ENCODE measurements at regions of chr19 and their contacts with region 1.

Region 1: DNA sequence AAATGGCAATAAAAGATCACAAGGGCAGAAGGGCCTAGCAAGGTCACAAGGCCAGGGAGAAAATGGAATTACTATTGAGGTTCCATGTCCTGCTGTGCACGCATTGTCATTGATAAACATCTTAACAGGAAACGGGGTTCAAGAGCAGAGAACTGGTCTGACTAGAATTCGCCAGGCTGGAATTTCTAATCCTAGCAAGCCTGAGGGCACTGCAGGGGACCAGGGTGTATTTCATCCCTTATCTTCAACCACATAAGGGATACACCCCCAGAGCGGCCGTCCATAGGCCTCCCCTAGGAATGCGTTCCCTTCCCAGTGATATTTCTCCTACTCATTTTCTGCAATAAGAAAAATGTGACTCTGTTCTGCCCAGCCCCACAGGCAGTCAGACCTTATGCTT is 19.5 kb downstream of the ERICH4 start:
- DNase-seq: no peak
- ATAC-seq: no peak
- H3K4me3 ChIP-seq: no peak overlapping the region
- H3K27ac ChIP-seq: no peak overlapping the region
- H3K4me1 ChIP-seq: no peaks in the 10 kb centered on the region
- H3K27me3 ChIP-seq: peaks cover 10% of the 10 kb centered on the region
- CTCF ChIP-seq: no peak

Region 2: GRCh38 chr19:41541990-41542584 is 79.6 kb after region 1 on chr19:
- CTCF ChIA-PET with region 1: no interaction called
- POLR2A ChIA-PET with region 1: no interaction called
- in situ Hi-C with region 1: no loop called
- intact Hi-C with region 1: loop called (anchors 10 kb)
- DNase-seq: no peak
- ATAC-seq: no peak
- H3K4me3 ChIP-seq: no peak overlapping the region
- H3K27ac ChIP-seq: no peak overlapping the region
- H3K4me1 ChIP-seq: no peaks in the 10 kb centered on the region
- H3K27me3 ChIP-seq: no peaks in the 10 kb centered on the region
- CTCF ChIP-seq: peak; percentile 76

Region 3: GRCh38 chr19:41554907-41555306 is 92.4 kb after region 1 on chr19:
- CTCF ChIA-PET with region 1: no interaction called
- POLR2A ChIA-PET with region 1: no interaction called
- in situ Hi-C with region 1: no loop called
- intact Hi-C with region 1: no loop called
- DNase-seq: no peak
- ATAC-seq: no peak
- H3K4me3 ChIP-seq: no peak overlapping the region
- H3K27ac ChIP-seq: no peak overlapping the region
- H3K4me1 ChIP-seq: no peaks in the 10 kb centered on the region
- H3K27me3 ChIP-seq: peaks cover 31% of the 10 kb centered on the region
- CTCF ChIP-seq: no peak